Activated T-helper 1 cell treated with anti-CD3 and anti-CD28 coated beads, Interleukin-12 subunit alpha, Interleukin-12 subunit beta, Interleukin-2, Interleukin-4 antibody, amounts not matched to agents 30 ng/mL and 10 ng/mL and 1 ng/mL, durations not matched to agents 14 hours and 24 hours and 36 hours (primary cell): ENCODE measurements at regions of chr9 and their contacts with region 1.

Region 1: DNA sequence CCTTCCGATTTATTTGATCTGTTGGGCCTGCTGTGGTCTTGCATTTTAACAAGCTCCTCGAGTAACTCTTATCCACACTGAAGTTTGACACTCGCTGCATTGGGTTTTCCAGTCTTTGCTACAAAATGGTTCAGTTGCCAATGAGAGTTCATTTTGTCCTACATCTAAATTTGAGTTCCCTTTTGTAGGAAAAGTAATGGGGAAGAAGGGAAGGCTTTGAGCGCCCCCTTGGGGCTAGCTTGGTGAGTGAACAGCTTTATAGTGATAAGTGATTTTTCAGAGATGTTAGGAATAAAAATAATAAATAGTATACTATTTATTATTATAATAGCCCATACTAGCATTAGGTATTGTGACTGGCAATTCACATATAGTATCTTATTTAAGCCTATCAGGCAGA is 89.9 kb upstream of the GNAQ start:
- DNase-seq: no peak
- H3K4me3 Mint-ChIP-seq: no peak overlapping the region
- H3K27ac Mint-ChIP-seq: no peak overlapping the region
- H3K4me1 Mint-ChIP-seq: peaks cover 31% of the 10 kb centered on the region
- H3K27me3 Mint-ChIP-seq: no peaks in the 10 kb centered on the region

Region 2: DNA sequence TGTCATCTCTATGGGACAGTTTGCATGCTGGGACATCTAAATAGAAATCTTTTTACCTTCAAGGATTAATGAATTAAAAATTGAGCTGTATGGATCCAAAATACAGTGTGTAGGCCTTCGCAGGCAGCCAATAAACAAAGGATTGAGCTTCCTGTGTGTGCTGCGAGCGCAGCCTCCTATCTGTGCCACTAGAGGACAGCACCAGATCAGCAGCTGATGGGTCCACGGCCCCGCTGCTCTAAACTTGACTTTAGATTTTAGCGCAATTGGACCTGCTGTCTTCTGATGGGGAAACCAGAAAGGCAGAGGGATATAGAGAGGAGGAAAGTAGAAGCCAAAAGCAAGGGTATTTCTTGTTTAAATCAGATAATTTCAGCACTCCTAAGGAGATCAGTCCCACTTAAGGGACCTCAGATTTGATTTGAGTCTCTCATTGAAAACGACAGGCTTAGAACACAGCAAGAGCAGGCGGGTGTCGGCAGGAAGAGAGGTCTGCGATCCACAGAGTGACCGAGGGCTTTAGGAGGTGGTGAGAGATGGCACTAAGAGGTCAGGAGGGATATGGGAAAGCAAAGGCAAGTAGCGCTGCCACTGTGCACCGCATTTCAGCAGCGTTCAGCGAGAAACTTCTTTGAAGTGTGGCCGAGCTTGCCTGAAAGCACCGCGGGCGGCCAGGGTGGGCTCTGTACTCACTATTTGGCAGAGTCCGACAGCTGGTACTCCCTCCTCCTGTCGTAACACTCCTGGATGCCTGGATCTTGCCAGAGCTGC is 687.6 kb before region 1 on chr9:
- intact Hi-C with region 1: loop called (anchors 1 kb)
- DNase-seq: peak; percentile 15
- H3K4me3 Mint-ChIP-seq: no peak overlapping the region
- H3K27ac Mint-ChIP-seq: no peak overlapping the region
- H3K4me1 Mint-ChIP-seq: peaks cover 5% of the 10 kb centered on the region
- H3K27me3 Mint-ChIP-seq: peaks cover 3% of the 10 kb centered on the region

Region 3: GRCh38 chr9:77475641-77476473 is 645.6 kb before region 1 on chr9:
- intact Hi-C with region 1: loop called (anchors 1 kb)
- DNase-seq: peak; percentile 54
- H3K4me3 Mint-ChIP-seq: peak overlapping the region; percentile 37
- H3K27ac Mint-ChIP-seq: peak overlapping the region; percentile 86
- H3K4me1 Mint-ChIP-seq: peaks cover 38% of the 10 kb centered on the region
- H3K27me3 Mint-ChIP-seq: no peaks in the 10 kb centered on the region

Region 4: DNA sequence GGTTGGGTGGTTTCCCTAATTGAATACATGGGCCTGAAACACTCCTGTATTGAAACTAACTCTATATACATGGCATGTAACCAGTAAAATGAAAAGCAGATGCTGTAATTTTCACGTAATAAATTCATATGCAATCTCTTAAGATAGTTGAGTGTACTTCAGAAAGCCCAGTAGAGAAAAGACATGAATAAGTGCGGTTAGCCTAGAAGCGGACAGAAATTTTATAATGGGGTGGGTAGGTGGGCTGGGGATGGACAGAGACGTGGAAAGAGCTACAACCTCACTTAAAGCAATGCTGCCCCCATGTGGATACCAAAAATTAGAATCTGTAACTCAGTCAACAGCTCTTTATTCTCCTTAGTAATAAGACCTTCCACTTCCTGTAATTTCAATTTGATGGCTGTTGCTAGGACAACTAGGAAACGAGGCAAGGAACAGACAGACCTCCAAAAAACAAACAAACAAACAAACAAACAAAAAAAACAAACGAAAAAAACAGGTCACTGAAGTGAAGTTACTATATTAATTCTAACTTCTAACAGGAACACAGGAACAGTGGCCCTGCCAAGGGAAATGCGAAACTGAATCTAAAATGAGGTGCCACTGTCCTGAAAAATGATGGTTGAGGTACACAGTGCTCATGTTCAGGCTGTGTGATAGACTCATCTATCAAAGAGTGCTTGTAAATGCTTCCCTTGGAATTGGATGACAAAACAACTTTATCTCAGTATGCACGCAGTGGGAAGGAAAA is 370.0 kb before region 1 on chr9:
- intact Hi-C with region 1: loop called (anchors 5 kb)
- DNase-seq: no peak
- H3K4me3 Mint-ChIP-seq: no peak overlapping the region
- H3K27ac Mint-ChIP-seq: no peak overlapping the region
- H3K4me1 Mint-ChIP-seq: peaks cover 26% of the 10 kb centered on the region
- H3K27me3 Mint-ChIP-seq: no peaks in the 10 kb centered on the region

Region 5: GRCh38 chr9:77977210-77977611 is 144.3 kb before region 1 on chr9:
- intact Hi-C with region 1: loop called (anchors 1 kb)
- DNase-seq: peak; percentile 34
- H3K4me3 Mint-ChIP-seq: peak overlapping the region; percentile 40
- H3K27ac Mint-ChIP-seq: peak overlapping the region; percentile 81
- H3K4me1 Mint-ChIP-seq: peaks cover 51% of the 10 kb centered on the region
- H3K27me3 Mint-ChIP-seq: no peaks in the 10 kb centered on the region

Region 6: DNA sequence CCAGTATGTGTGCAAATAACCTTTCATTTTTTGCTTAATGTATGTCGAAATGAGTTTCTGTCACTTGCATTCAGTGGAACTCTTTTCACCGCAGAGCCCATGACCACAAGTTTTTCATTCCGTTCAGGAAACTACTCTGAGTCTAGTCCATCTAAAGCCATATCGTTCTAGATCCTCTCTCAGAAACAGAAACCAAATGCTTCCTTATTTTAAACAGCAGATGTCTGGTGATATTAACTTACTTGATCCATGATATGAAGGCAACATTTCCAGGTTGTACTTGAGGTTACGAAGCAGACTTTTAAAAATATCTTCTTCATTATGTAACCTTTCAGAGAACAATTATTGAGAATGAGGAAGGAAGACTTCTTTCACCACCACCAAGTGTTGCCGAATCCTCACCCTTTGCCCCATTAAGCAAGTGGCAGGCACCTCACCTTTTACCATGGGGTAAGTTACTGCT is 17.5 kb before region 1 on chr9:
- intact Hi-C with region 1: loop called (anchors 1 kb)
- DNase-seq: peak; percentile 45
- H3K4me3 Mint-ChIP-seq: peak overlapping the region; percentile 11
- H3K27ac Mint-ChIP-seq: peak overlapping the region; percentile 25
- H3K4me1 Mint-ChIP-seq: peaks cover 45% of the 10 kb centered on the region
- H3K27me3 Mint-ChIP-seq: peaks cover 2% of the 10 kb centered on the region

Region 7: GRCh38 chr9:78187763-78188484 is 66.4 kb after region 1 on chr9:
- intact Hi-C with region 1: no loop called
- DNase-seq: no peak
- H3K4me3 Mint-ChIP-seq: no peak overlapping the region
- H3K27ac Mint-ChIP-seq: no peak overlapping the region
- H3K4me1 Mint-ChIP-seq: no peaks in the 10 kb centered on the region
- H3K27me3 Mint-ChIP-seq: peaks cover 7% of the 10 kb centered on the region